Naive thymus-derived CD4-positive, alpha-beta T cell (primary cell): ENCODE measurements at regions of chr6 and their contacts with region 1.

Region 1: GRCh38 chr6:139124887-139125672 is 9.8 kb upstream of the HECA start:
- DNase-seq: peak in 8 of 9 donors; percentile 65 to 90 (median 84)
- ATAC-seq: peak; percentile 99
- H3K4me3 ChIP-seq: peak overlapping the region; percentile 31
- H3K4me3 Mint-ChIP-seq: peak overlapping the region; percentile 25 to 86 (median 68)
- H3K27ac ChIP-seq: peak overlapping the region; percentile 60
- H3K27ac Mint-ChIP-seq: peak overlapping the region; percentile 86 to 97 (median 94)
- H3K4me1 ChIP-seq: peaks cover 28 to 38% of the 10 kb centered on the region in 2 donors
- H3K4me1 Mint-ChIP-seq: peaks cover 19 to 65% (median 60%) of the 10 kb centered on the region in 7 donors
- H3K27me3 ChIP-seq: no peaks in the 10 kb centered on the region
- H3K27me3 Mint-ChIP-seq: no peaks in the 10 kb centered on the region

Region 2: GRCh38 chr6:139109558-139109957 is 15.5 kb before region 1 on chr6:
- CTCF ChIA-PET with region 1: interaction called, 21 read pairs
- POLR2A ChIA-PET with region 1: interaction called, 37 read pairs
- intact Hi-C with region 1: loop called (anchors 1 kb)
- DNase-seq: peak in 2 of 9 donors; percentile 21 to 28
- ATAC-seq: no peak
- H3K4me3 ChIP-seq: no peak overlapping the region
- H3K4me3 Mint-ChIP-seq: peak overlapping the region in 2 of 10 donors; percentile 6 to 36
- H3K27ac ChIP-seq: no peak overlapping the region
- H3K27ac Mint-ChIP-seq: peak overlapping the region in 8 of 9 donors; percentile 38 to 94 (median 86)
- H3K4me1 ChIP-seq: peaks cover 36 to 48% of the 10 kb centered on the region in 2 donors
- H3K4me1 Mint-ChIP-seq: peaks cover 17 to 74% (median 59%) of the 10 kb centered on the region in 7 donors
- H3K27me3 ChIP-seq: no peaks in the 10 kb centered on the region
- H3K27me3 Mint-ChIP-seq: no peaks in the 10 kb centered on the region

Region 3: GRCh38 chr6:139146317-139146726 is 21.2 kb after region 1 on chr6:
- CTCF ChIA-PET with region 1: interaction called, 8 read pairs
- POLR2A ChIA-PET with region 1: interaction called, 14 read pairs
- intact Hi-C with region 1: no loop called
- DNase-seq: no peak
- ATAC-seq: peak; percentile 31
- H3K4me3 ChIP-seq: peak overlapping the region; percentile 43
- H3K4me3 Mint-ChIP-seq: peak overlapping the region; percentile 68 to 85 (median 80)
- H3K27ac ChIP-seq: peak overlapping the region; percentile 4
- H3K27ac Mint-ChIP-seq: peak overlapping the region; percentile 37 to 91 (median 73)
- H3K4me1 ChIP-seq: peaks cover 80 to 89% of the 10 kb centered on the region in 2 donors
- H3K4me1 Mint-ChIP-seq: peaks cover 88 to 97% (median 94%) of the 10 kb centered on the region in 7 donors
- H3K27me3 ChIP-seq: no peaks in the 10 kb centered on the region
- H3K27me3 Mint-ChIP-seq: no peaks in the 10 kb centered on the region

Region 4: DNA sequence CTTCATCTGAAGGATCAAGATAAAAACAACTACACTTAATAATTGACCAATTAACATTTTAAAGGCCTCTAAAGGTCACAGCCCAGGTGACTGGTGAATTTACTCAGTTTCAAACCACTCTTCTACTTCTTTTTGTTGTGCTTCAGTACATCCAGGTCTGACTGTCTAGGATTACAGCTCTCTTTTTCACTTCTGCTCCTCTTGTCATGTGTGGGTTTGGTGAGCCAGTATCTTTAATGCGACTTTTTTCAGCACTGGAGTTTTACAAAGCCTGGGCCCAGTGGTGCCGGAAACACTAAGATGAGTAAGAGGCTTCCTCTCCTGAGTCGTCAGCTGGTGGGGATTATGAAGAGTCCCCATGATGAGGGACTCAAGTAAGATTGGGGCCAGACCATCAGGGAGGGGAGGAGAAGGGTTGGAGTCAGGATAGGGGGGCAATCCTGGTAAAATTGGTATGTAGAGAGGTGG is 36.8 kb after region 1 on chr6:
- CTCF ChIA-PET with region 1: interaction called, 3 read pairs
- POLR2A ChIA-PET with region 1: interaction called, 24 read pairs
- intact Hi-C with region 1: loop called (anchors 1 kb)
- DNase-seq: peak in 8 of 9 donors; percentile 59 to 78 (median 73)
- ATAC-seq: peak; percentile 64
- H3K4me3 ChIP-seq: peak overlapping the region; percentile 11
- H3K4me3 Mint-ChIP-seq: peak overlapping the region; percentile 79 to 88 (median 83)
- H3K27ac ChIP-seq: peak overlapping the region; percentile 75
- H3K27ac Mint-ChIP-seq: peak overlapping the region; percentile 86 to 98 (median 91)
- H3K4me1 ChIP-seq: peaks cover 81 to 85% of the 10 kb centered on the region in 2 donors
- H3K4me1 Mint-ChIP-seq: peaks cover 70 to 96% (median 86%) of the 10 kb centered on the region in 7 donors
- H3K27me3 ChIP-seq: no peaks in the 10 kb centered on the region
- H3K27me3 Mint-ChIP-seq: no peaks in the 10 kb centered on the region

Region 5: DNA sequence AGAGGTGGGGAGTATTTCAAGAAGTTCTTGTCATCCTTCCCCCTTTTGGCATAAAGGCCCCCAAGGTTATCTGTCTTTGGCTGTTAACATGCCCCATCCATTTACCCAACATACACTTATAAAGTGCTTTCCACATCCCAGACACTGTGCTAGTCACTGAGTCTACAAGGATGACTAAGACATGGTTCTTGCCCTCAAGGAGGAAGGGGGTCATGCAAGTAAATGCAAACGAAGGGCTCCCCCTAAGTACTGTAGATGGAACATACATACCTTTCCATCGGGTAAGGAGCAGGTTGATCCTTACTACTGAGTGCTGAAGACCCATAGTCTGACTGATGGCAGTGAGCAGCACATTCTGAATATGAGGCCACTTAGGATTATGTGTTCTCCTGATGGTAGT is 48.1 kb after region 1 on chr6:
- CTCF ChIA-PET with region 1: interaction called, 10 read pairs
- POLR2A ChIA-PET with region 1: interaction called, 13 read pairs
- intact Hi-C with region 1: loop called (anchors 1 kb)
- DNase-seq: peak in 6 of 9 donors; percentile 31 to 54 (median 40)
- ATAC-seq: peak; percentile 69
- H3K4me3 ChIP-seq: no peak overlapping the region
- H3K4me3 Mint-ChIP-seq: peak overlapping the region; percentile 16 to 75 (median 60)
- H3K27ac ChIP-seq: peak overlapping the region; percentile 49
- H3K27ac Mint-ChIP-seq: peak overlapping the region; percentile 64 to 88 (median 83)
- H3K4me1 ChIP-seq: peaks cover 50 to 85% of the 10 kb centered on the region in 2 donors
- H3K4me1 Mint-ChIP-seq: peaks cover 70 to 95% (median 92%) of the 10 kb centered on the region in 7 donors
- H3K27me3 ChIP-seq: no peaks in the 10 kb centered on the region
- H3K27me3 Mint-ChIP-seq: no peaks in the 10 kb centered on the region

Region 6: DNA sequence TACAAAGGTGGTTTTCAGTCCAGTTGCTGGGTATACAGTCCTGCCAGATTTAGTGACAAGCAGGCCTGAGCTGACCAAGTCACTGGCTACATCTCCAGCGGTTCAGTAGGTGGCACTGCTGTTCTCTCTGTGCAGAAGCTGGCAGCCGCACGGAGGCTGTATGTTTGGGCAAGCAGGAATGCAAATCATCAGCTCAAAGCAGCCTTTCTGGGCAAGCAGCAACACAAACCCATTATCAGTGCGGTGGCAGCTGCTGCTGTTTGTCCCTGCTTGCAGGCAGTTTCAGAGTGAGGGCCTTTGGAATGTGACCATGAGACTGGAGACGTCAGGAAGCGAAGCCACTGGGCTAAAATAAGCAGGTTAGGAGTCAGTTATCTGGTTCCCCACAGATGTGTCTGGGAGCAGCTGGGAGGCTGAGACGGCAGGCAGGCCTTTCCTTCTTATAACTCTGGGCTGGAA is 94.2 kb after region 1 on chr6:
- CTCF ChIA-PET with region 1: interaction called, 16 read pairs
- POLR2A ChIA-PET with region 1: interaction called, 11 read pairs
- intact Hi-C with region 1: loop called (anchors 1 kb)
- DNase-seq: peak; percentile 39 to 76 (median 60)
- ATAC-seq: peak; percentile 100
- H3K4me3 ChIP-seq: no peak overlapping the region
- H3K4me3 Mint-ChIP-seq: peak overlapping the region in 8 of 10 donors; percentile 41 to 68 (median 58)
- H3K27ac ChIP-seq: no peak overlapping the region
- H3K27ac Mint-ChIP-seq: peak overlapping the region; percentile 49 to 92 (median 78)
- H3K4me1 ChIP-seq: peaks cover 5 to 10% of the 10 kb centered on the region in 2 donors
- H3K4me1 Mint-ChIP-seq: peaks cover 6 to 20% (median 12%) of the 10 kb centered on the region in 7 donors
- H3K27me3 ChIP-seq: no peaks in the 10 kb centered on the region
- H3K27me3 Mint-ChIP-seq: no peaks in the 10 kb centered on the region

Region 7: GRCh38 chr6:139250296-139251044 is 125.4 kb after region 1 on chr6:
- CTCF ChIA-PET with region 1: no interaction called
- POLR2A ChIA-PET with region 1: no interaction called
- intact Hi-C with region 1: loop called in 1 of 2 experiments (anchors 1 kb)
- DNase-seq: peak; percentile 7 to 45 (median 34)
- ATAC-seq: peak; percentile 90
- H3K4me3 ChIP-seq: no peak overlapping the region
- H3K4me3 Mint-ChIP-seq: peak overlapping the region in 6 of 10 donors; percentile 16 to 85 (median 58)
- H3K27ac ChIP-seq: no peak overlapping the region
- H3K27ac Mint-ChIP-seq: peak overlapping the region; percentile 32 to 97 (median 73)
- H3K4me1 ChIP-seq: peaks cover 21 to 23% of the 10 kb centered on the region in 2 donors
- H3K4me1 Mint-ChIP-seq: peaks cover 23 to 48% (median 46%) of the 10 kb centered on the region in 7 donors
- H3K27me3 ChIP-seq: no peaks in the 10 kb centered on the region
- H3K27me3 Mint-ChIP-seq: no peaks in the 10 kb centered on the region

Region 8: GRCh38 chr6:139982652-139983295 is 857.7 kb after region 1 on chr6:
- CTCF ChIA-PET with region 1: no interaction called
- POLR2A ChIA-PET with region 1: no interaction called
- intact Hi-C with region 1: no loop called
- DNase-seq: no peak
- ATAC-seq: no peak
- H3K4me3 ChIP-seq: no peak overlapping the region
- H3K4me3 Mint-ChIP-seq: no peak overlapping the region
- H3K27ac ChIP-seq: no peak overlapping the region
- H3K27ac Mint-ChIP-seq: no peak overlapping the region
- H3K4me1 ChIP-seq: no peaks in the 10 kb centered on the region
- H3K4me1 Mint-ChIP-seq: peaks cover 0 to 10% (median 8%) of the 10 kb centered on the region in 7 donors
- H3K27me3 ChIP-seq: no peaks in the 10 kb centered on the region
- H3K27me3 Mint-ChIP-seq: peaks cover 0 to 16% (median 5%) of the 10 kb centered on the region in 5 donors

Region 9: GRCh38 chr6:140107216-140107615 is 982.1 kb after region 1 on chr6:
- CTCF ChIA-PET with region 1: no interaction called
- POLR2A ChIA-PET with region 1: no interaction called
- intact Hi-C with region 1: no loop called
- DNase-seq: no peak
- ATAC-seq: no peak
- H3K4me3 ChIP-seq: no peak overlapping the region
- H3K4me3 Mint-ChIP-seq: no peak overlapping the region
- H3K27ac ChIP-seq: no peak overlapping the region
- H3K27ac Mint-ChIP-seq: no peak overlapping the region
- H3K4me1 ChIP-seq: no peaks in the 10 kb centered on the region
- H3K4me1 Mint-ChIP-seq: no peaks in the 10 kb centered on the region
- H3K27me3 ChIP-seq: no peaks in the 10 kb centered on the region
- H3K27me3 Mint-ChIP-seq: peaks cover 0 to 14% (median 4%) of the 10 kb centered on the region in 5 donors